ENCODE measurements at regions of chr12 and their contacts with region 1.

Region 1: DNA sequence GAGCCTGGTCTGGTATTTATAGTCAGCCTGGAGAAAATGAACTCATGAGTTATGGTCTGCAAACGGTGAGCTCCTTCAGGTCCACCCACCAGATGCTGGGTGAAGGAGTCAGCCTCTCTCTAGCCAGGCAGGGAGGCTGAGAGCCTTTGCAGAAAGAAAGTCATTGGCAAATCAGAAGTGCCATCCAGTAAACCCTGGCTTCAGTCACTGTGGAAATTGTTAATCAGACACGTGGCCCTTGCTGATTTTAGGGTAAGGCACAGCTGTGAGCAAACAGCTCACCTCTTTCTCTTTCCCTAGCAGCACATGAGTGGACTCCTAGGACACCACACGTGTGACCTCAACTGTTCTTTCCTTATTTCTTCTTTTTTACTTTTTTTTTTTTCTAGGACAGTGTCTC is 44.9 kb downstream of the CHST11 start:
- DNase-seq: no peak
- ATAC-seq: no peak
- H3K4me3 ChIP-seq: no peak overlapping the region
- H3K27ac ChIP-seq: no peak overlapping the region
- H3K4me1 ChIP-seq: peaks cover 7% of the 10 kb centered on the region
- H3K27me3 ChIP-seq: no peaks in the 10 kb centered on the region
- CTCF ChIP-seq: no peak

Region 2: GRCh38 chr12:104482113-104482512 is 19.5 kb before region 1 on chr12:
- CTCF ChIA-PET with region 1: no interaction called
- POLR2A ChIA-PET with region 1: interaction called, 13 read pairs
- in situ Hi-C with region 1: no loop called
- intact Hi-C with region 1: no loop called
- DNase-seq: no peak
- ATAC-seq: no peak
- H3K4me3 ChIP-seq: no peak overlapping the region
- H3K27ac ChIP-seq: no peak overlapping the region
- H3K4me1 ChIP-seq: no peaks in the 10 kb centered on the region
- H3K27me3 ChIP-seq: no peaks in the 10 kb centered on the region
- CTCF ChIP-seq: no peak

Region 3: DNA sequence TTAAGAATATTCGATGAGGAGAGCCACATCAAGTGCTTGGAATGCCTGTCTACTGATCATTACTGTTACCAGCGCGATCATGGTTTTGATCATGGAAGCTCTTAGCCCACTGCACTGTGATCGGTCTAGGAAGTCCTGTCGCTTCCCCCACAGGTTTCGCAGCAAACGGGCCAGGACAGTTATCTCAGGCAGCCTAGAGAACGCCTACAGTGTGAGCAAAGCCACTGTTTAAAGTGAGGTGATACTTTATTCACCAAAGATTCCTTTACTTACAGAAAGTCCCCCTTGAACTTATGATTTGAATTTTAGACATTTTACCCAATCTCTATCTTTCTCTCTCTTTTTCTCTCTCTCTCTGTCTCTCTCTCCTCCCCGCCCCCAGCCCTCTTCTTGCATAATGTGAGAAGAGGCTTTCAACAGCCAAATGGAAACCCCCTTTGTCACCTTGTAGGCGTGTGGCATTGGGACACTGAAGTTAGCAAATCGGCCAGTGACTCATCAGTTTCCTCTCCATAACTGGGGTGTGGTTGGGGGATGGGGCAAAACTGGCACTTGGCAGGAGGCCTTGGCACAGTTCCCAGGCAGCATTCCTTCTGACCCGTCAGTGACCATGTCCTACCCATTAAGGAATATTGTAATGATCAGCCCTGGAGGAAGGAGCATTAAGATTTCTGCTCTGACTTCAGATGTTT is 169.9 kb after region 1 on chr12:
- CTCF ChIA-PET with region 1: no interaction called
- POLR2A ChIA-PET with region 1: no interaction called
- in situ Hi-C with region 1: no loop called
- intact Hi-C with region 1: no loop called
- DNase-seq: peak; percentile 89
- ATAC-seq: peak; percentile 73
- H3K4me3 ChIP-seq: no peak overlapping the region
- H3K27ac ChIP-seq: peak overlapping the region; percentile 67
- H3K4me1 ChIP-seq: peaks cover 22% of the 10 kb centered on the region
- H3K27me3 ChIP-seq: no peaks in the 10 kb centered on the region
- CTCF ChIP-seq: no peak

Region 4: GRCh38 chr12:104966677-104967076 is 465.0 kb after region 1 on chr12:
- CTCF ChIA-PET with region 1: no interaction called
- POLR2A ChIA-PET with region 1: no interaction called
- in situ Hi-C with region 1: no loop called
- intact Hi-C with region 1: no loop called
- DNase-seq: no peak
- ATAC-seq: no peak
- H3K4me3 ChIP-seq: no peak overlapping the region
- H3K27ac ChIP-seq: no peak overlapping the region
- H3K4me1 ChIP-seq: no peaks in the 10 kb centered on the region
- H3K27me3 ChIP-seq: peaks cover 6% of the 10 kb centered on the region; the same call in 1 of the 2 replicates
- CTCF ChIP-seq: no peak

Measured in Panc1 (cell line).